ENCODE measurements at regions of chr20 and their contacts with region 1.

Region 1: DNA sequence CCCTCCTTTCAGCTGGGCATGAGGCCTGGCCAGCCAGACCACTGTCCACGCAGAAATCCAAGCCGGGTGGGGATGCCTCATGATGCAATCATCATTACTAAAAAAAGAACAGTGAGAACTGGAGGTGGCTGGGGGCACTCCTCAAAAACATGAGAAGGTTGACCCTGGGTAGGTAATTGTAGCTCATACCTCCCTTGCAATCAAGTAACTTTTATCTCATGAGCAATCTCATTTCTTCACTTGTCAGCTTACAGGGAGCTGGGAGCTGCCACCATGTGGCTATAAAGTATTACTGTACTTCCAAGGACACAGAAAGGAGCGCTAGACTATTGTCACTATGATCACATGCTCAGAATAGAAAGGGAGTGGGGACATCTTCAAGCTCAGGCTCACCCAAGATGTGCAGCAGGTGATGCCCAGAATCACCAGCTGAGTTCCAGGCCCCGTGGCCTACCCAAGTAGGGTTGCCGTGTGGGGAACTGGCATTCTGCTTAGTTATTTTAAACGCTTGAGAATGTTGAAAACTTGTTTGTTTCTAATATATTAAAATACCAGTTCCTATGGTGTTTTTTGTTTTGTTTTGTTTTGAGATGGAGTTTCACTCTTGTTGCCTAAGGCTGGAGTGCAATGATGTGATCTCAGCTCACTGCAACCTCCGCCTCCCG is 3.0 kb upstream of the CDH26 start:
- DNase-seq: peak in 1 of 2 donors; percentile 57
- ATAC-seq: peak; percentile 95 to 98 (median 97)
- H3K4me3 ChIP-seq: no peak overlapping the region
- H3K27ac ChIP-seq: peak overlapping the region; percentile 71
- H3K4me1 ChIP-seq: peaks cover 7% of the 10 kb centered on the region
- H3K27me3 ChIP-seq: no peaks in the 10 kb centered on the region
- CTCF ChIP-seq: peak; percentile 54

Region 2: DNA sequence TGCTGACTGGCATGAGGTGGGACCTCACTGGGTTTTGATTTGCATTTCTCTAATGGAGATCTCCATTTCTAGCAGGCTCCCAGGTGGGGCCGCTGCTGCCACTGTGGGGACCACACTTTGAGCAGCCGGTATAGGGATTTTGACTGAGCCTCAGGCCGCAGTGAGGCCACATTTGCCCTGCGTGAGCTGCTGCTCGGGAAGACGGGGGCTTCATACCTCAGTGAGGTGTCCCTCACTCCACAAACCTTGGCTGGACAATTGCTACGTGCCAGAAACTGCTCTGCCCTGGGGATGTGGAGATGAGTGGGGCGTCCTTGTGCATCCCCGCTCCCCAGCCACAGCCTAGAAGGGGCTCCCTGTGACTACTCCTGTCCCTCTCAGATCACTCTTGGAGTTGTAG is 1861.1 kb before region 1 on chr20:
- intact Hi-C with region 1: no loop called
- DNase-seq: no peak
- ATAC-seq: no peak
- H3K4me3 ChIP-seq: no peak overlapping the region
- H3K27ac ChIP-seq: no peak overlapping the region
- H3K4me1 ChIP-seq: no peaks in the 10 kb centered on the region
- H3K27me3 ChIP-seq: no peaks in the 10 kb centered on the region
- CTCF ChIP-seq: no peak

Region 3: GRCh38 chr20:59940174-59940971 is 14.9 kb before region 1 on chr20 and contains the starts of genes FAM217B and PPP1R3D:
- intact Hi-C with region 1: loop called in 1 of 2 experiments (anchors 2 kb)
- DNase-seq: peak; percentile 97 to 98
- ATAC-seq: peak; percentile 87 to 90 (median 88)
- H3K4me3 ChIP-seq: peak within 1 kb of the TSS; percentile 85
- H3K27ac ChIP-seq: peak within 1 kb of the TSS; percentile 96
- H3K4me1 ChIP-seq: peaks cover 62% of the 10 kb centered on the region
- H3K27me3 ChIP-seq: no peaks in the 10 kb centered on the region
- CTCF ChIP-seq: peak; percentile 19
- total RNA-seq, gene FAM217B: 6.5 to 29.2 (median 6.9) TPM
- total RNA-seq, gene PPP1R3D: 4.6 to 8.8 (median 7.0) TPM